CD8-positive, alpha-beta memory T cell (primary cell): ENCODE measurements at regions of chr17 and their contacts with region 1.

Region 1: DNA sequence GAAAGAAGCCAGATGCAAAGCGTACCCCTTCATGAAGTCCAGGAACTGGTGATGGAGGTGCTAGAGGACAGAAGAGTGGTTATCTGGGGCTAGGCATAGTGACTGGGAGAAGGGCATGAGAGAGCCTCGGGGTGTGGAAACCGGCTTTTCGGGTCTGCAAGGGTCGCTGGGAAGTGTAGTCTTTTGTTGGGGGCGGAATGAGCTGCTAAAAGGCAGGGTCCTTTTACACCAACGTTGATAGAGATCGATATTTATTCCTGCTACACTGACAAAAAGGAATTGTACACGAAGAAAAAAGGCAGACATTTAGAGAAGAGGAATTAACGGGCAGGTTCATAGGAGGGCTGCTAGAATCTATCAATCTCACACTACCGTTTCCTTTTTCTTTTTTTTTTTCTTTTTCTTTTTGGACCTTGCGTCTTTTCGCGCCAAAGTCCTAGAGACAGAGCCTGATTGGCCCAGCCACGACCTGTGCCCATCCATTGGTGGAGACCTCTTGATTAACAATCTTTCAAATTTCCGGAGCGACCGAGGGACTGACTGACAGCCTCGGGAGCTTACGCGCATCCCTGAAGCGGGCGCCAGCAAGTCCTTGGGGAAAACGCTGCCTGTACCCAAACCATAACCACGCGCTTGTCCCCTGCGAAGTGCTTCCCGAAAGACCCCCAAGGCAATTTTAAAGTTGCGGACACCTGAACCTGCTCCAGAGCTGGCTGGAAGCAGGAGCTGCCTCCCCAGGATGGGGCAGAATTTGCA is 27.7 kb upstream of the DHRS7B start:
- DNase-seq: peak; percentile 40 to 69 (median 56)
- H3K4me3 ChIP-seq: peak overlapping the region; percentile 65
- H3K4me3 Mint-ChIP-seq: peak overlapping the region; percentile 82 to 90 (median 84)
- H3K27ac ChIP-seq: no peak overlapping the region
- H3K27ac Mint-ChIP-seq: peak overlapping the region in 4 of 8 donors; percentile 10 to 36 (median 23)
- H3K4me1 ChIP-seq: no peaks in the 10 kb centered on the region
- H3K4me1 Mint-ChIP-seq: peaks cover 12 to 14% (median 13%) of the 10 kb centered on the region in 3 donors
- H3K27me3 ChIP-seq: no peaks in the 10 kb centered on the region
- H3K27me3 Mint-ChIP-seq: peaks cover 3 to 7% of the 10 kb centered on the region in 2 donors

Region 2: DNA sequence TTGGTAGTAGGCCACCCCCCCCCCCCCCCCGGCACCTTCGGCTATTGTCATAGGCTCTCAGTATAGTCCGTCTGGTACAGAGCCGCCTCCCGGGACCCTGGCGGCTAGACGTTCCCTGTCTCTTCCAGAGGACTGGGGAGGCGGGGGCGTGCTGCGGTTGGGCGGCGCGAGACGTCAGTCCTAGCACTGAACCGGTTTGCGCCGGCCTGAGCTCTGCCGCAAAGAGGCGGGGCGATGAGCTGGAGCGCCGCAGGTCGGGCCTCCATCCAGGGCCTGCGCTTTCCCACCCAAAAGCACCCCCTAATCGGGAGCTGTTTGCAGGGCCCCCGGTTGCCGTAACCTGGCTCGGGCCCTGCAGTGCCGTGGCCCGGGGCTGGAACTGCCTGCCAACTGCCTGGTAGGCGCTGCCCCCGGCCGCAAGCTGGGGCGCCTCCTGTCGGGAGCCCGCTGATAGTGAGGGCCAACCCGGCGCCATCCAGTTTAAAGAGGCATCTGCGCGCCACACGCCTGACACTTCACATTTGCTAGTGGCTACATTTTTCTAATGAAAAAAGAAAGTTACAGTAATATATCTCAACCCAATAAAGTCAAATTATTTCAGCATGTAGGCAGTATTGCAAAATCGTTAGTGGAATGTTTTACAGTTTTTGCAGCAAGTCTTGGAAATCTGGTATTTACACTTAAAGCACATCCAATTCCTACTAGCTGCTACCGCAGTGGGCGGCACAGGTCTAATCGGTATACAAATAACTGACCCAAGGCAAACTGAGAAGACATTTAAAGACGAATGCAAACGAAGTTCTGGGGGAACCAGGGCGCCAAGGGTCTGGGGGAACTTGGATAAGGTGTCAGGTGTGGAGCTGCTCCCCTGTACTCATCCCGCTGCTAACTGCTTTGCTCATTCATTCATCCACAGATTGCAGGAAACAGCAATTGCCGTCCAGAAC is 55.6 kb before region 1 on chr17:
- CTCF ChIA-PET with region 1: interaction called, 19 read pairs
- POLR2A ChIA-PET with region 1: interaction called, 10 read pairs
- DNase-seq: peak; percentile 96 to 98 (median 96)
- H3K4me3 ChIP-seq: peak overlapping the region; percentile 57
- H3K4me3 Mint-ChIP-seq: peak overlapping the region; percentile 77 to 91 (median 84)
- H3K27ac ChIP-seq: peak overlapping the region; percentile 91
- H3K27ac Mint-ChIP-seq: peak overlapping the region; percentile 91 to 96 (median 94)
- H3K4me1 ChIP-seq: peaks cover 27% of the 10 kb centered on the region
- H3K4me1 Mint-ChIP-seq: peaks cover 30 to 36% (median 35%) of the 10 kb centered on the region in 3 donors
- H3K27me3 ChIP-seq: no peaks in the 10 kb centered on the region
- H3K27me3 Mint-ChIP-seq: peaks cover under 1 to 1% of the 10 kb centered on the region in 2 donors

Region 3: DNA sequence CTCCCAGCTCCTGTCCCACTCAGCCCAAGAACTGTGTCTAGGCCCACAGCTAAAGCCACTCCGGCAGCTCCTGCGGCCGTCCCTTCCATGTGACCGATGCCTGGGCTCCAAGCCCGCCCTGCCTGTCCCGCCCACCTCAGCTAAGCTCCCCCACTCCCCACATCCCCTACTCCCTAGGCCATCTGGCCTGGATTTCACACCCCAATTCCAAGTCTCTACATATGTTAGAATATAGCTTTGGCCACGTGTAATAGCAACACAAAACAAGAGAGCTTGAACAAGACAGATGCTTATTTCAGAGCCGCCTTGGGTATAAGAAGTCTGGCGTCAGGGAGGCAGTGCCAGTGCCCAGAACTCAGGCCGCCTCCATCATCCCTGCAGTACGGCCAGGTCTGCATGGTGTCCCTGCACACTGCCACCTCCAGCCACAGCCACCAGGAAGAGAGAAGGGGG is 26.3 kb before region 1 on chr17:
- CTCF ChIA-PET with region 1: no interaction called
- POLR2A ChIA-PET with region 1: no interaction called
- DNase-seq: no peak
- H3K4me3 ChIP-seq: no peak overlapping the region
- H3K4me3 Mint-ChIP-seq: no peak overlapping the region
- H3K27ac ChIP-seq: no peak overlapping the region
- H3K27ac Mint-ChIP-seq: no peak overlapping the region
- H3K4me1 ChIP-seq: no peaks in the 10 kb centered on the region
- H3K4me1 Mint-ChIP-seq: no peaks in the 10 kb centered on the region
- H3K27me3 ChIP-seq: no peaks in the 10 kb centered on the region
- H3K27me3 Mint-ChIP-seq: peaks cover 6 to 15% of the 10 kb centered on the region in 2 donors

Region 4: DNA sequence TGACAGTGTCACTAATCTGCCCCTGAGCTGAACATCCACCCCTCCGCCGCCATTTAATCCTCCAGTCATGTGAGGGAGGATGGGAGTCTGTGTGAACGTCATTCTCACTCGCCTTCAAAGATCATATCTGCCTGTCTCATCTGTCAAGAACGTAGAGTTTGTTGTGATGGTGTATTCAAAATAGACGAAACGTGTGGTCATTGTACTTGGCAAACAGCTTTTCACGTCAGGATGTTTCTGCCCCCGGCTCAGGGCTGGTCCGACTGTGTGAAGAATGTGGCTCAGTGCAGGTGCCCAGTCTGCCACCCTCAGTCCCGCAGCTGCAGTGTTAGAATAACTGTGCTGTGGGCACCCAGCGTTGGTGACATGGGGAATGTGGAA is 425.1 kb after region 1 on chr17:
- CTCF ChIA-PET with region 1: no interaction called
- POLR2A ChIA-PET with region 1: interaction called, 14 read pairs
- DNase-seq: no peak
- H3K4me3 ChIP-seq: no peak overlapping the region
- H3K4me3 Mint-ChIP-seq: no peak overlapping the region
- H3K27ac ChIP-seq: no peak overlapping the region
- H3K27ac Mint-ChIP-seq: no peak overlapping the region
- H3K4me1 ChIP-seq: no peaks in the 10 kb centered on the region
- H3K4me1 Mint-ChIP-seq: no peaks in the 10 kb centered on the region
- H3K27me3 ChIP-seq: no peaks in the 10 kb centered on the region
- H3K27me3 Mint-ChIP-seq: peaks cover 10 to 22% of the 10 kb centered on the region in 2 donors